ENCODE measurements at regions of chr10 and their contacts with region 1.

Region 1: GRCh38 chr10:122915700-122916099 is 5.3 kb downstream of the FAM24A start:
- DNase-seq: no peak
- H3K4me3 ChIP-seq: no peak overlapping the region
- H3K27ac ChIP-seq: no peak overlapping the region
- H3K4me1 ChIP-seq: no peaks in the 10 kb centered on the region
- H3K27me3 ChIP-seq: no peaks in the 10 kb centered on the region
- CTCF ChIP-seq: no peak
- POLR2A ChIP-seq: no peak

Region 2: GRCh38 chr10:122974023-122974422 is 58.3 kb after region 1 on chr10:
- intact Hi-C with region 1: no loop called
- DNase-seq: no peak
- H3K4me3 ChIP-seq: no peak overlapping the region
- H3K27ac ChIP-seq: no peak overlapping the region
- H3K4me1 ChIP-seq: no peaks in the 10 kb centered on the region
- H3K27me3 ChIP-seq: no peaks in the 10 kb centered on the region
- CTCF ChIP-seq: no peak
- POLR2A ChIP-seq: no peak

Region 3: GRCh38 chr10:123637303-123637880 is 721.7 kb after region 1 on chr10:
- intact Hi-C with region 1: loop called (anchors 5 kb)
- DNase-seq: no peak
- H3K4me3 ChIP-seq: no peak overlapping the region
- H3K27ac ChIP-seq: no peak overlapping the region
- H3K4me1 ChIP-seq: no peaks in the 10 kb centered on the region
- H3K27me3 ChIP-seq: peaks cover 0 to 7% of the 10 kb centered on the region in 2 donors
- CTCF ChIP-seq: no peak
- POLR2A ChIP-seq: no peak

Measured in breast epithelium (tissue), 4 donors.